ENCODE measurements at regions of chr3 and their contacts with region 1.

Region 1: GRCh38 chr3:56812754-56813650 is 11.3 kb upstream of the ARHGEF3 start:
- DNase-seq: no peak
- CTCF ChIP-seq: no peak

Region 2: GRCh38 chr3:56825567-56826438 is 12.8 kb after region 1 on chr3:
- CTCF ChIA-PET with region 1: interaction called, 13 read pairs
- POLR2A ChIA-PET with region 1: no interaction called
- DNase-seq: no peak
- CTCF ChIP-seq: no peak

Measured in GM10248 (cell line).